Endothelial cell of umbilical vein (primary cell): ENCODE measurements at regions of chr11 and their contacts with region 1.

Region 1: GRCh38 chr11:118227865-118228785 is 3.3 kb upstream of the JAML start:
- DNase-seq: peak; percentile 43
- H3K4me3 ChIP-seq: no peak overlapping the region
- H3K27ac ChIP-seq: peak overlapping the region; percentile 34
- H3K4me1 ChIP-seq: peaks cover 27% of the 10 kb centered on the region
- H3K27me3 ChIP-seq: no peaks in the 10 kb centered on the region
- CTCF ChIP-seq: no peak
- POLR2A ChIP-seq: no peak

Region 2: DNA sequence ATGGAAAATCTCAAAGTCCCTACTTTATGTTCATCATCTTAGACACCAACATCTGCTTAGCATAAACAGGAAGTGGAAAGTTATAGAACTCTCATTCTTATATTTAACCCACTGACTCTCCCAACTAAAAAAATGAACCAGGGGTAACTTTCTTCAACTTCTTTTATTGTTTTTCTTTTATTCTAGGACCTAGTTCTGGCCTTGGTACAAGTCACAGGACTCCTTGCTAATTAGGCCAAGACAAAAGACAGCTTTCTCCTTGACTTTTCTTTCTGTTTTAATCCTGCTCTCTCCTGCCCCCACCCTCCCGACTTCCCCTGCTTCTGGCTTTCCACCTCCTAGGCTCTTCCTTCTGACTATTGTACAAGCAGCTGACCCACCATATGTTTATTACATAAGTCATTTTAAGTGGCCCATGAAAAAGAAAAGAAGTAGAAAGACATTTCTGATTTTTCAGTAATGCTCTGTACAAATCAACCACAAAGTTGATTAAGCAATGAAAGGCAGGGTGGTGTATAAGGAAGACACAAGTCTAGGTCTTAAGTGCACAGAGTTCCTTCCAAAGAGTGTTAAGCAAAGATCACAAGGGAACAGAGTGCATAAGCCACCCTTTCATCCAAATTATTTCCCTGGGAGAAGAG is 21.6 kb before region 1 on chr11:
- CTCF ChIA-PET with region 1: no interaction called
- POLR2A ChIA-PET with region 1: no interaction called
- dilution Hi-C with region 1: no loop called
- intact Hi-C with region 1: loop called (anchors 2 kb)
- DNase-seq: peak; percentile 85
- H3K4me3 ChIP-seq: no peak overlapping the region
- H3K27ac ChIP-seq: peak overlapping the region; percentile 19
- H3K4me1 ChIP-seq: peaks cover 15% of the 10 kb centered on the region
- H3K27me3 ChIP-seq: peaks cover 2 to 7% of the 10 kb centered on the region in 2 experiments
- CTCF ChIP-seq: no peak
- POLR2A ChIP-seq: no peak

Region 3: GRCh38 chr11:118240999-118241768 is 13.1 kb after region 1 on chr11:
- CTCF ChIA-PET with region 1: interaction called, 18 read pairs
- POLR2A ChIA-PET with region 1: no interaction called
- dilution Hi-C with region 1: no loop called
- intact Hi-C with region 1: loop called (anchors 1 kb)
- DNase-seq: peak; percentile 93
- H3K4me3 ChIP-seq: peak overlapping the region in 1 of 3 experiments; percentile 4
- H3K27ac ChIP-seq: peak overlapping the region; percentile 64
- H3K4me1 ChIP-seq: peaks cover 45% of the 10 kb centered on the region
- H3K27me3 ChIP-seq: no peaks in the 10 kb centered on the region
- CTCF ChIP-seq: no peak
- POLR2A ChIP-seq: peak; percentile 78

Region 4: GRCh38 chr11:118251858-118252652 is 23.9 kb after region 1 on chr11 and contains the start of gene MPZL3:
- CTCF ChIA-PET with region 1: interaction called, 3 read pairs
- POLR2A ChIA-PET with region 1: no interaction called
- dilution Hi-C with region 1: no loop called
- intact Hi-C with region 1: loop called (anchors 1 kb)
- DNase-seq: peak; percentile 78
- H3K4me3 ChIP-seq: peak within 1 kb of the TSS; percentile 40 to 95 (median 85)
- H3K27ac ChIP-seq: peak within 1 kb of the TSS; percentile 62
- H3K4me1 ChIP-seq: peaks cover 15% of the 10 kb centered on the region
- H3K27me3 ChIP-seq: no peaks in the 10 kb centered on the region
- CTCF ChIP-seq: no peak
- POLR2A ChIP-seq: peak; percentile 66
- total RNA-seq, gene MPZL3: 7.0 and 7.1 TPM in 2 replicates

Region 5: GRCh38 chr11:118290923-118291322 is 62.8 kb after region 1 on chr11:
- CTCF ChIA-PET with region 1: interaction called, 16 read pairs
- POLR2A ChIA-PET with region 1: no interaction called
- dilution Hi-C with region 1: no loop called
- intact Hi-C with region 1: loop called (anchors 1 kb)
- DNase-seq: peak; percentile 68
- H3K4me3 ChIP-seq: no peak overlapping the region
- H3K27ac ChIP-seq: no peak overlapping the region
- H3K4me1 ChIP-seq: no peaks in the 10 kb centered on the region
- H3K27me3 ChIP-seq: no peaks in the 10 kb centered on the region
- CTCF ChIP-seq: peak; percentile 30 to 53
- POLR2A ChIP-seq: no peak